GM12878 (cell line): ENCODE measurements at regions of chr13 and their contacts with region 1.

Region 1: DNA sequence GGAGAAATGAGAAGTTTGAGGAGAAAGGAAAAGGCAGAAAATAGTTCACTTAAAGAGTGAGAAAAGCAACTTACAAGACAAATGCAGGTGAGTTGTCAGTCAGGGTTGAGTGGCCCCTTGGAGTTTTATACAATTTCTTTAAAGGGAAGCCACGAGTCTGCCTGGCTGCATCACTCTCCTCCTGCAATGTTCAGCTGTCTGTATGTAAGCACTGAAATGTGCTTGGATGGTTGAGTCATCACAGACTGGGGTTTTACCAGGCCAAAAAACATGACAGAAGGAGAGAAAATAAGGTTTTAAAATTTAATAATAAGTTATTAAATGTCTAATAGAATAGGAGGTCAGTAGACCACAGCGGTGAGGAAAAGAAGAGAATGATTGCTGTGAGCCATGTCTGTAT is 51.0 kb upstream of the FGF14 start:
- DNase-seq: no peak
- ATAC-seq: no peak
- H3K4me3 ChIP-seq: no peak overlapping the region
- H3K27ac ChIP-seq: no peak overlapping the region
- H3K4me1 ChIP-seq: no peaks in the 10 kb centered on the region
- H3K27me3 ChIP-seq: no peaks in the 10 kb centered on the region; a peak in 1 of 4 replicates
- CTCF ChIP-seq: no peak
- EP300 ChIP-seq: no peak
- POLR2A ChIP-seq: no peak
- RAD21 ChIP-seq: no peak

Region 2: GRCh38 chr13:101795025-101795424 is 657.8 kb before region 1 on chr13:
- CTCF ChIA-PET with region 1: no interaction called
- POLR2A ChIA-PET with region 1: no interaction called
- RAD21 ChIA-PET with region 1: no interaction called
- SMC1A ChIA-PET with region 1: no interaction called
- in situ Hi-C with region 1: no loop called
- intact Hi-C with region 1: loop called (anchors 10 kb)
- DNase-seq: no peak
- ATAC-seq: no peak
- H3K4me3 ChIP-seq: no peak overlapping the region
- H3K27ac ChIP-seq: no peak overlapping the region
- H3K4me1 ChIP-seq: no peaks in the 10 kb centered on the region
- H3K27me3 ChIP-seq: no peaks in the 10 kb centered on the region
- CTCF ChIP-seq: no peak
- EP300 ChIP-seq: no peak
- POLR2A ChIP-seq: no peak
- RAD21 ChIP-seq: no peak

Region 3: DNA sequence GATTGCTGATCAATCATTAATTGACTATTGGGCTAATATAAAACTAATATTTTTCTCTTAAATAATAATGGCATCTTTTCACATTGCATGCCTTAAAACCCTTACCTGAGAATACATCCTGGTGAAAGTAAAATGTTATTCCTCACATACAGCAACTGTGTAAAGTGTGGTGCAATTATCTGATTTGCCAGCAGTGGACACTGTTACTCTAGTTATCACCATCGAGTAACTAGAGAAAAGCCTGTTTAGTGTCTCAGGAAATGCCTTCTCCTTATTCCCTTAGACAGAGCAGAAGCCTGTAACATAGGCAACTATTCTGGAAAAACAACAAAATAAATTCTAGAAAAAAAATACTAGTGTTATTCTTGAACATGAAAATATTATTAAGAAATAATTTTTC is 510.8 kb before region 1 on chr13:
- CTCF ChIA-PET with region 1: interaction called, 18 read pairs
- POLR2A ChIA-PET with region 1: no interaction called
- RAD21 ChIA-PET with region 1: interaction called, 5 read pairs
- SMC1A ChIA-PET with region 1: interaction called, 5 read pairs
- in situ Hi-C with region 1: loop called (anchors 10 kb)
- intact Hi-C with region 1: loop called (anchors 1 kb)
- DNase-seq: no peak
- ATAC-seq: peak; percentile 78
- H3K4me3 ChIP-seq: no peak overlapping the region
- H3K27ac ChIP-seq: no peak overlapping the region
- H3K4me1 ChIP-seq: no peaks in the 10 kb centered on the region
- H3K27me3 ChIP-seq: no peaks in the 10 kb centered on the region
- CTCF ChIP-seq: peak; percentile 62 to 63 (median 63)
- EP300 ChIP-seq: no peak
- POLR2A ChIP-seq: no peak
- RAD21 ChIP-seq: peak; percentile 72

Region 4: DNA sequence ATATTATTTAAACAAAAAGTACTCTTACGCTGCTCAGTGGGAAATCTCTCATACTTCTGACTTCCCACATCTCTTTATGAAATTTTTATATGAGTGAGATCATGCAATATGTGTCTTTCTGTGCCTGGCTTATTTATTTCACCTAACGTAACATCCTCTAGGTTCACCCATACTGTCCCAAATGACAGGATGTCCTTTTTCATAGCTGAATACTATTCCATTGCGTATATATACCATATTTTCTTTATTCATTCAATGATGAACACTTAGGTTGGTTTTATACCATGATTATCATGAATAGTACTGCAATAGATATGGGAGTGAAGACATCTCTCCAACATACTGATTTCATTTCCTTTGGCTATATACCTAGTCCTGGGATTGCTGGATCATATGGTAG is 86.1 kb after region 1 on chr13:
- CTCF ChIA-PET with region 1: no interaction called
- POLR2A ChIA-PET with region 1: no interaction called
- RAD21 ChIA-PET with region 1: no interaction called
- SMC1A ChIA-PET with region 1: no interaction called
- in situ Hi-C with region 1: no loop called
- intact Hi-C with region 1: no loop called
- DNase-seq: no peak
- ATAC-seq: no peak
- H3K4me3 ChIP-seq: no peak overlapping the region
- H3K27ac ChIP-seq: no peak overlapping the region
- H3K4me1 ChIP-seq: no peaks in the 10 kb centered on the region
- H3K27me3 ChIP-seq: no peaks in the 10 kb centered on the region
- CTCF ChIP-seq: no peak
- EP300 ChIP-seq: no peak
- POLR2A ChIP-seq: no peak
- RAD21 ChIP-seq: no peak